Activated CD8-positive, alpha-beta T cell treated with anti-CD3 and anti-CD28 coated beads for 36 hours (primary cell): ENCODE measurements at regions of chr18 and their contacts with region 1.

Region 1: DNA sequence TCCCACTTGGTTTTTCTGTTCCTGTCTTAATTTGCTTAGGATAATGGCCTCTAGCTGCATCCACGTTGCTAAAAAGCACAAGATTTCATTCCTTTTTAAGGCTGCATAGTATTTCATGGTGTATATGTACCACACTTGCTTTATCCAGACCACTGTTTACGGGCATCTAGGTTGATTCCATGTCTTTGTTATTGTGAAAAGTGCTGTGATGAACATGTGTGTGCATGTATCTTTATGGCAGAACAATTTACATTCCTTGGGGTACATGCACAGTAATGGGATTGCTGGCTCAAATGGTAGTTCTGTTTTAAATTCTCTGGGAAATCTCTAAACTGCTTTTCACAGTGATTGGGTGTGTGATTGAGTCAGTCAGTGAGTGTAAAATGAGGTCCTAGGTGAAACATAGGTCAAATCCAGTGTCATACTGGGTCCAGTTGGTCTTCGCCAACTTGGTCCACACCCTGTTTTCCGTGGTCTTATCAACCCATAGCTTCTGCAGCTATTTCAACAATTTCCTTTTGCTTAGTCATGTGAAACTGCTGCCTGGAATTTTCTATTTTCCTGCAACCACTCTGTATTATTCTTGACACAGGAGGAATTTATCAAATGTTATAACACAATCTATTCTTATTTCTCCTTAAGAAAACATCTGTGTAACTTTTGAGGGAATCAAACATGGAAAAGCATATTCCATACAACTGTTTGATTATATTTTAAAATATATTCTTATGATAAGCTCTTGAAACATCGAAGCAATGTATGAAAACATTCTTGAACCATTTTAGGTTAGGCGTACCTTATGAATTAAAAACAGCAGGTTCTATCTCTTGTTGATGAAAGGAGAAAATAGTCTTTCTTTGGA is 82.9 kb downstream of the ADCYAP1 start:
- DNase-seq: no peak
- ATAC-seq: no peak
- H3K4me3 Mint-ChIP-seq: no peak overlapping the region
- H3K27ac Mint-ChIP-seq: no peak overlapping the region
- H3K4me1 Mint-ChIP-seq: no peaks in the 10 kb centered on the region
- H3K27me3 Mint-ChIP-seq: peaks cover 1% of the 10 kb centered on the region
- CTCF ChIP-seq: no peak

Region 2: DNA sequence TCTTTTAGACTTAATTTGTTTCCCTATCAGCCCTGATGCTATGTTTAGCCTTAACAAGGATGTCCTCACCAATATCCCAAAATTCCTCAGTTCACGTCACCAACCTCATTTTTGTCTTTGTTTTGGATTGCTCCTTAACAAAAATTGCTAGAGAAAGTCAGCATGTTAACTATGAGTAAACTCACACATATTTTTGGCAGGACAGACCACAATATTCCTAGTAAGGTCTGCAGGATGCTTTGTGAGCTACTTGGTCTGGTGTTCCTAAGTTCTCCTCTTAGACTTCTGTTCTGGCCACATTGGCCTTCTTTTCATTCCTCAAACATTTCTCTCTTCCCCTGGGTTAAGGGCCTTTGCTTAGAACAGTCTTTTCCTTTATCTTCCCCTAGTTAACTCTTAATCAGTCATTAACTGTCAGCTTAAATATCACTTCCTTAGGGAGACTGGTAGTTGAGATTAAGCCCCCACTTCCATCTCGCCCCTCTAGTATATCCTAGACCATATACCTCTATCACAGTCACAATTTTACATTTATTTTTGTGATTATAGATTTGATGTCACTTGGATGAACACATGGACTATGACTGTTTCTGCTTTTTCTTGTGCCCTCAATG is 33.3 kb after region 1 on chr18:
- CTCF ChIA-PET with region 1: no interaction called
- POLR2A ChIA-PET with region 1: no interaction called
- intact Hi-C with region 1: no loop called
- DNase-seq: no peak
- ATAC-seq: no peak
- H3K4me3 Mint-ChIP-seq: no peak overlapping the region
- H3K27ac Mint-ChIP-seq: no peak overlapping the region
- H3K4me1 Mint-ChIP-seq: no peaks in the 10 kb centered on the region
- H3K27me3 Mint-ChIP-seq: peaks cover 2% of the 10 kb centered on the region
- CTCF ChIP-seq: no peak

Region 3: GRCh38 chr18:2083691-2084090 is 1096.1 kb after region 1 on chr18:
- CTCF ChIA-PET with region 1: no interaction called
- POLR2A ChIA-PET with region 1: no interaction called
- intact Hi-C with region 1: loop called (anchors 10 kb)
- DNase-seq: peak; percentile 25
- ATAC-seq: no peak
- H3K4me3 Mint-ChIP-seq: no peak overlapping the region
- H3K27ac Mint-ChIP-seq: no peak overlapping the region
- H3K4me1 Mint-ChIP-seq: no peaks in the 10 kb centered on the region
- H3K27me3 Mint-ChIP-seq: no peaks in the 10 kb centered on the region
- CTCF ChIP-seq: peak; percentile 21